ENCODE measurements at regions of chr18 and their contacts with region 1.

Region 1: DNA sequence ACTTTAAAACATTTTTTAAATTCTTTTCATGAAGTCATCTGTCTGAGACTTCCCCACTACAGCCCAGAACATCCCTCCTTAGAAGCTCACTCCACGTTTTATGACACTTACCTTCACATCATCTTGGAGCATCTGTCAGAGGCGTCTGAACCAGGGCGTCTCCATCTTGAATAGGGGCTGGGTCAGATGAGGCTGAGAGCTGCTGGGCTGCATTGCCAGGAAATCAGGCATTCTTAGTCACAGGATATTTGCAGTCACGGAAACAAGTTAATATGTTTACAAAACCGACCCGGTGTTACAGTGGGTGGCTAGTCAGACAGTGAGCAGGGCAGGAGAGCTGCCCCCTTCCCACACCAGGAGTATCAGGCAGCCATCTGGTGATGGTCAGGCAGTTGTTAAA is 456.5 kb downstream of the FBXO15 start:
- DNase-seq: no peak
- ATAC-seq: peak; percentile 17 to 56

Region 2: DNA sequence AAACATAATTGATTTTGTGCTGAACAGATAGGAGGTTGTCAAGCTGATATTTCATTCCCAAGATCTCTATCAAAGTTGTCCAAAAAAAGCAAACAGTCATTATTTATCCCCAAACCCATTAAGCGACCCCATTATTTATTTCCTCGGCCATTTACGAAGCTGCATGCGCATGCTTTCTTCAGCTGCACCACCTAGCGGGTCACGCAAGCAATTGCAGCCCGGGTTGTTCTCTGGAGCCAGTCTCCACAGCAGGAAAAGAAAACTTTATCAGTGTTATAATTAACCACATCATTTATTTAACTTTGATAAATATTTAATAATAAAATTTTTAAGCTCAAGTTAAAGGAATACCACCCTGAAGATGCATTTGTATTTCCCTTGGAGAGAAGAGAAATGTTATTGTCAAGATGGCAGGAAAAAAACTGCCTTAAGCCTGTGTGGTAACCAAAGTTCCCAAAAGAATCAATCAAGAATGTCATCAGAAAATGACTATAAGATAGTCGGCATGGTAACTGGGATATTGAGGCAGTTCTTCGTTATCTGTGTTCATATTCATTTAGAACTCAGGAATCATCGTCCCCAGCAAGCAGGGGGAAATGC is 151.8 kb after region 1 on chr18:
- intact Hi-C with region 1: loop called in 1 of 2 experiments (anchors 10 kb)
- DNase-seq: peak; percentile 29
- ATAC-seq: peak in 1 of 2 donors; percentile 44